CD4-positive, alpha-beta T cell (primary cell): ENCODE measurements at regions of chr11 and their contacts with region 1.

Region 1: DNA sequence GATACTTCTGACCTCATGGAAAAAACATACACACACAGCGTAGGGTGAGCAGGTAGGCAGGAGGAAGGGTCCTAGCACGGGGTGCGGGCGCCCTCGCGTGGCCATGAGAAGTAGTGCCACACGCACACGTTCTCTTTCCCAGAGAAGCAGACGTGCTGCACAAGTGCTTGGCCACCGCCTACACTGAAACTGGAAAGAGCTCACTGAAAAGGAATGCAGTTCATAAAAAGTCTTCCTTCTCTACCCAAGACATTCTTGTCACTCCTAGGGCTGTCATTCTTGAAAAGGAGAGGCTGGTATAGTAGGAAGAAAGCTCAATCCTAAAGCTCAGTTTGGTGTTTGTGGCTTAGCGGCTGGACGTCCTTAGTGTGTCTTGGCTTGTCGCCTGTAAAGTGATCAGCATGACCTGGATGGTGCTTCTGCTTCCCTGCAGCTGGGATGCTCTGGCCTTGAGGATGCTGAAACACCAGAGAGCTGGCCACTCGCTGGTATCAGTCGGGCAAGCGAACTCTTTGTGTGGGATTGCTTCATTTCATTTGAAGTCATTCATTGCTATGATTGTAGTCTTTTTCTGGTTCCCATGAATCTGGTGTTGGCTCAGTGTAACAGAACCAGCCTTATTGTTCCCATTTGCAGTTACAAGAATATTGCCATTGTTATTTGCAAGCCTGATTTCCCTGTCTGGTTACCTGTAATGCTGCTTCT is 303.8 kb downstream of the NTM start:
- DNase-seq: peak in 4 of 14 experiments; percentile 11 to 41 (median 24)
- ATAC-seq: no peak
- H3K4me3 ChIP-seq: no peak overlapping the region
- H3K4me3 Mint-ChIP-seq: no peak overlapping the region
- H3K27ac ChIP-seq: no peak overlapping the region
- H3K27ac Mint-ChIP-seq: no peak overlapping the region
- H3K4me1 ChIP-seq: no peaks in the 10 kb centered on the region
- H3K4me1 Mint-ChIP-seq: no peaks in the 10 kb centered on the region
- H3K27me3 ChIP-seq: no peaks in the 10 kb centered on the region
- H3K27me3 Mint-ChIP-seq: no peaks in the 10 kb centered on the region
- CTCF ChIP-seq: peak; percentile 28

Region 2: DNA sequence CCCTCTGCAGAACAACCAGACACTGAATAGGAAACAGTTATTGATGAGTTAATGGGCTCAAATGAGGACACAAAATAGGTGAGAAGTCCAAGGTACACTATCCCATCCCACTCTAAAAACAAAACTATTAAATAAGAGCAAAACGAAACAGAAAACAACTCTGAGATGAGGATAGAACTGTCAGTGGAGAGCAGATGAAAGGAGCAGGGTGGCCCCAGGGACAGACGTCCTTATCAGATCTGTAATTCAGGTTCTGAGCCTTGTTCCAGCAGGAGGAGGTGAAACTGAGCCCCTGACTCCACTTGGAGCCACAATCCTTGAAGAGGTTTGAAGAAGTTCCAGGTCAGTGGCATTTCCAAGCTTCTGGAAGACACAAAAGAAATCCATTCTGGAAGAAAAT is 749.4 kb before region 1 on chr11:
- CTCF ChIA-PET with region 1: no interaction called
- POLR2A ChIA-PET with region 1: no interaction called
- intact Hi-C with region 1: loop called in 1 of 2 experiments (anchors 10 kb)
- DNase-seq: no peak
- ATAC-seq: no peak
- H3K4me3 ChIP-seq: no peak overlapping the region
- H3K4me3 Mint-ChIP-seq: no peak overlapping the region
- H3K27ac ChIP-seq: no peak overlapping the region
- H3K27ac Mint-ChIP-seq: no peak overlapping the region
- H3K4me1 ChIP-seq: no peaks in the 10 kb centered on the region
- H3K4me1 Mint-ChIP-seq: no peaks in the 10 kb centered on the region
- H3K27me3 ChIP-seq: no peaks in the 10 kb centered on the region
- H3K27me3 Mint-ChIP-seq: peaks cover 43% of the 10 kb centered on the region
- CTCF ChIP-seq: no peak

Region 3: DNA sequence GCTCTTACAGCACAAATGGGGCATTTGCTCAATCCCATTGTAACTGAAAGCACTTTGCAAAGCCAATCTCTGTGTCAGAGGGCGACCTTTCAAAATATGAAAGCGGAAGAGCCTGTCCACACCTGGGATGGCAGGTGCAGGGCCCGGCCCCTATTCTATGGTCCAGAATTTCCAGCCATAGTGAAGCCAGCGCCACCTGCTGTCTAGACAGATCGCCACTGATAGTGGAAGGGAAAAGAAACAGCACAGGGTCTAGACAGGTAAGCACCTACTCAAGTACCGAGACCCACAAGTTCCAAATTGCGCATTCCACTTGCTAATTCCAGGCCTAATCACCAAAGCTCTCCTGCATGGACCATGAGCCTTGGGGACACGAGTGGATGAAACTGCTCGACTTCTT is 162.4 kb before region 1 on chr11:
- CTCF ChIA-PET with region 1: no interaction called
- POLR2A ChIA-PET with region 1: no interaction called
- intact Hi-C with region 1: no loop called
- DNase-seq: no peak
- ATAC-seq: no peak
- H3K4me3 ChIP-seq: no peak overlapping the region
- H3K4me3 Mint-ChIP-seq: no peak overlapping the region
- H3K27ac ChIP-seq: no peak overlapping the region
- H3K27ac Mint-ChIP-seq: no peak overlapping the region
- H3K4me1 ChIP-seq: no peaks in the 10 kb centered on the region
- H3K4me1 Mint-ChIP-seq: no peaks in the 10 kb centered on the region
- H3K27me3 ChIP-seq: no peaks in the 10 kb centered on the region
- H3K27me3 Mint-ChIP-seq: peaks cover 4% of the 10 kb centered on the region
- CTCF ChIP-seq: no peak

Region 4: DNA sequence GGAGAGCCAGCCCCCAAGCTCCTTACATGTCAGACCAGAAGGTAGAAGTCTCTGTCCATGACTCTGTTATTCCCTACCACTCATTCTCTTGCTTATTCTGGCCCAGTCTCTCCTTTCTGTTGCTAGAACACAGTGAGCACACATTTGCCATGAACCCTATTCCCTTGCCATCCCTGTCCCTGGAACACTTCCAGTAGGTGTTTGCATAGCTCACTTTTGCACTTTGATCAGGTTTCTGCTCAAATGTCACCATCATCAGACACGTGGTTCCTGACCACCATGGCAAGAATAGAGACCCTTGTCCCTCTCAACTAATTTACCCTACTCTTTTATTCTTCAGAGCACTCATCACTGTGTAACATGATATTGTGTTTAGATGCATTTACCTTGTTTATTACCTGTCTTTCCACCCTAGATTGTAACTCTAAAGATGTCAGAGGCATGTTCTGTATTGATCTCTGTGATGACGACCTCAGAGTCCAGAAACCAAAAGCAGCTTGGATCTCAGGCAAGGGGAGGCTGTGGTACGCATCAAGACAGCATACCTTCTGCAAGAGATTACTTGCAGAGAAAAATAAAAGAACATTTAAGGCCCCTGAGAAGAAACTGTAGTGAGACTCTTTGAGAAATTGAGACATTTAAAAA is 1251.7 kb after region 1 on chr11:
- CTCF ChIA-PET with region 1: no interaction called
- POLR2A ChIA-PET with region 1: no interaction called
- intact Hi-C with region 1: no loop called
- DNase-seq: no peak
- ATAC-seq: no peak
- H3K4me3 ChIP-seq: no peak overlapping the region
- H3K4me3 Mint-ChIP-seq: no peak overlapping the region
- H3K27ac ChIP-seq: no peak overlapping the region
- H3K27ac Mint-ChIP-seq: no peak overlapping the region
- H3K4me1 ChIP-seq: no peaks in the 10 kb centered on the region
- H3K4me1 Mint-ChIP-seq: no peaks in the 10 kb centered on the region
- H3K27me3 ChIP-seq: no peaks in the 10 kb centered on the region
- H3K27me3 Mint-ChIP-seq: peaks cover 12% of the 10 kb centered on the region
- CTCF ChIP-seq: no peak